ENCODE measurements at regions of chr1 and their contacts with region 1.

Region 1: GRCh38 chr1:171715813-171716251 is 26.0 kb downstream of the VAMP4 start:
- DNase-seq: peak; percentile 10
- ATAC-seq: no peak
- H3K4me3 ChIP-seq: no peak overlapping the region
- H3K27ac ChIP-seq: no peak overlapping the region
- H3K4me1 ChIP-seq: no peaks in the 10 kb centered on the region
- H3K27me3 ChIP-seq: no peaks in the 10 kb centered on the region
- CTCF ChIP-seq: peak; percentile 23; the same call in 1 of the 2 replicates
- EP300 ChIP-seq: no peak
- POLR2A ChIP-seq: no peak
- RAD21 ChIP-seq: no peak

Region 2: DNA sequence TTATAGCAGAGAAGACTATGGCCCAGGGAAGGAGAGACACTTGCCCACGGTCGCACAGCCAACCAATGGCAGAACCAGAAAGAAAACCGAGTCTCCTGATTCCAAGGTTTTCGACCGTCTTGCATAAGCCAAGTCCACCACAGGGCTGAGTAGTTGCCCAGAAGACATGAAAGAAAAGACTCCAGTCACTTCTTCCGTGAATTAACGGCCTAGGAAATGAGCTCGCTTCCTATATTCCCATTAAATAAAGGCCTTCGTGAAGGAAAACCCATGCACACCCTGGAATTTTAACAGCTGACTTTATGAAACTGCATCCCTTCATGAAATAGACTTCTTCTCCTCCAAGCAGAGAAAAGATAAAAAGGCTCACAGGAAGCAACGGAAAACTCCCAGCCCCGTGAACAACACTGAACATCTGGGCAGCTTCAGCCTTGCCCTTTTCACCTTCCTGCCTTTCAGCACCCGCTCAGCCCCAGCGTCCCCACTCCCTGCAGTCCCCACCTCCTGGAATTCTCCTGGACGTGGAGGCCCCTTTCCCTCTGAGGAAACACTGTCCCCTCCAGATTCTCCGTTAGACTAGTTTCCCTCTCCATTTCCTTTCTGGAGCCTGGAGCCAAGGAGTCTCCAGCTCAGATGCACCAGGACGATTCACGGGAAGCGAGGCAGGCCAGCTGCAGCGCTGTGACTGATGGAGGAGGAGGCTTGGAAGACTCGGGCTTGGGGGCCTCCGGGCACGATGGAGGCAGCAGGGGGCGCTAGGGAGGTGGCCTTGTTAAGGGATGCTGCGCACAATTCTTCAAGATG is 60.7 kb before region 1 on chr1:
- CTCF ChIA-PET with region 1: interaction called, 9 read pairs
- POLR2A ChIA-PET with region 1: no interaction called
- in situ Hi-C with region 1: no loop called
- intact Hi-C with region 1: loop called (anchors 2 kb)
- DNase-seq: peak; percentile 18
- ATAC-seq: peak; percentile 86
- H3K4me3 ChIP-seq: peak overlapping the region in 1 of 3 experiments; percentile 27; a peak in 1 of 6 replicates
- H3K27ac ChIP-seq: no peak overlapping the region
- H3K4me1 ChIP-seq: peaks cover 20% of the 10 kb centered on the region
- H3K27me3 ChIP-seq: peaks cover 1 to 5% of the 10 kb centered on the region in 2 experiments; a peak in 3 of 5 replicates
- CTCF ChIP-seq: peak; percentile 79
- EP300 ChIP-seq: no peak
- POLR2A ChIP-seq: no peak
- RAD21 ChIP-seq: no peak

Measured in HepG2 (cell line).